GM12878 (cell line): ENCODE measurements at regions of chr4 and their contacts with region 1.

Region 1: DNA sequence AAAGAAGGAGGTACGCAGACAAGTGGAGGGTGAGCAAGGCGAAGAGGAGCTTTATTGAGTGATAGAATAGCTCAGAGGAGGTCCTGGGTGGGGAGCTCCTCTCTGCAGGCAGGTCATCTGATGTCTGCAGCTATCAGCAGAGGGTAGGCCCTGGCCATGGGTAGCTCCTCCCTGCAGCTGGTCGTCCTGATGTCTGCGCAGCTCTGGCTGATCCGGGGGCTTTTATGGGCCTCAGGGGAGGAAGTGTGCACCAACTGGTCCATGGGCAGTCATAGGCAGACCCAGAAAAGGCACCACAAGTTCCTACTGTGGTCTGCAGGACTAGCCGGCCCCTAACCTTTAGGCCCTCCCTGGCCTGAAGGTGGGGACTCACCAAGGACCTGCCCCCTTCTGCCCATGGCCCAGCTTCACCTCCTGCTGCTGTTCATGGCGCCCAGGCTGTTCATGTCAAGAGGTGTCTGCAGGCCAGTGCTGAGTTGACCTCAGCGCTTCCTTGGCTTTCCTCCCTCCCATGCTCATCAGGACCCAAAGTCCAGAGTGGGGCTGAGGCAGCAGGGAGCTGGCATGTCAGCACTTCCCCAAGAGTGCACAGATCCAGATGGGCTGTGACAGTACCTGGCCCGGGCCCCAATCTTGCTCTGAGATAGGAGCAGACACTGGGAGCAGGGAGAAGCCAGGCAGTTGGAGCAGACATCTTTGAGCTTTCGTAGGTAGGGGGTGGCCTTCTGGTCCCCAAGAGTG is 46.1 kb downstream of the ARAP2 start:
- DNase-seq: no peak
- ATAC-seq: no peak; the same call in 2 of the 3 replicates
- H3K4me3 ChIP-seq: no peak overlapping the region
- H3K27ac ChIP-seq: no peak overlapping the region
- H3K4me1 ChIP-seq: no peaks in the 10 kb centered on the region
- H3K27me3 ChIP-seq: no peaks in the 10 kb centered on the region
- CTCF ChIP-seq: no peak
- EP300 ChIP-seq: no peak
- POLR2A ChIP-seq: no peak
- RAD21 ChIP-seq: no peak

Region 2: GRCh38 chr4:36187723-36188333 is 10.4 kb before region 1 on chr4:
- CTCF ChIA-PET with region 1: interaction called, 9 read pairs
- POLR2A ChIA-PET with region 1: no interaction called
- RAD21 ChIA-PET with region 1: interaction called, 5 read pairs
- SMC1A ChIA-PET with region 1: interaction called, 32 read pairs
- in situ Hi-C with region 1: no loop called
- intact Hi-C with region 1: no loop called
- DNase-seq: no peak
- ATAC-seq: peak; percentile 27; the same call in 1 of the 3 replicates
- H3K4me3 ChIP-seq: no peak overlapping the region
- H3K27ac ChIP-seq: no peak overlapping the region
- H3K4me1 ChIP-seq: peaks cover 6% of the 10 kb centered on the region
- H3K27me3 ChIP-seq: no peaks in the 10 kb centered on the region
- CTCF ChIP-seq: peak; percentile 54 to 70 (median 65)
- EP300 ChIP-seq: no peak
- POLR2A ChIP-seq: no peak
- RAD21 ChIP-seq: peak; percentile 70